ENCODE measurements at regions of chr4 and their contacts with region 1.

Region 1: DNA sequence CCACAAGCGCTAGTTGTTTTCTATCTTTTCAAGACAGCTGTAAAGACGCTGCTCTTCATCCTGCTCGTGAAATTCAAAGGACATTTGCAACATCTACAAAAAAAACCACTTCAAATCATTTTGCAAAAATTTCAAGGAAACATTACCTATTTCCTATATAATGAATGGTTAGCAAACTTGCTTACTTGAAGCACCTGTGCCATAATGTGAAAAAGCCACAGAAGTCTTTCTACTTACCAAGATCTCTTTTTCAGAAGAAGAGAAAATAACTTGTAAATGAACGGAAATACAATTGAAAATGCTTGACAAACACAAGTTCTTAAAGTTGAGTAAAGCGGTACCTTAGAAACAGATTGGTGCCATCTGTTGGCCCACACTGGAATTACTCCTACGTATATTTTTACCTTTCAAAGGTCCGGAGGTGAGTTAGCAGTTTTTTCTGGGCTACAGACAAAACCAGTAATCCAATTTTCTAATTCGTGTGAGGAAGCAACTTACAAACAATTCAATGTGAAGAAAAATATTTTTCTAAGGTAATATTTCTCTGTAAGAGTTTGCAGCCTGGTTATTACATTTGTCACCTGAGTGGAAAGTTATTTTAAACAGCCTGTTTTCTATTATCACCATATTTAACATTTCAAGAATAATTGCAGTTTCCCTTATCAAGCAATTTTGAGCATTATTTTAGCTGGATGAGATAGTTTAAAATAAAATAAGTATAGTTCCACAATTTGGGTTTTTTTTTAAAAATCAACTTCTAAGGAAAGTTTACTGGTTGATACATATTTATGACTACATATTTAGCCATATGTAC is at the start of gene TLR6:
- DNase-seq: peak; percentile 9 to 88 (median 58)
- ATAC-seq: peak; percentile 79 to 88 (median 80)
- H3K4me3 ChIP-seq: peak within 1 kb of the TSS in 1 of 2 donors; percentile 18
- H3K4me3 Mint-ChIP-seq: peak within 1 kb of the TSS; percentile 69 to 82 (median 81)
- H3K27ac ChIP-seq: peak within 1 kb of the TSS; percentile 30
- H3K27ac Mint-ChIP-seq: peak within 1 kb of the TSS; percentile 89 to 96
- H3K4me1 ChIP-seq: peaks cover 12 to 20% of the 10 kb centered on the region in 2 experiments
- H3K4me1 Mint-ChIP-seq: peaks cover 34 to 49% (median 48%) of the 10 kb centered on the region in 3 donors
- H3K27me3 ChIP-seq: no peaks in the 10 kb centered on the region
- H3K27me3 Mint-ChIP-seq: no peaks in the 10 kb centered on the region
- total RNA-seq, gene TLR6: 2.3 to 7.7 (median 3.2) TPM

Region 2: GRCh38 chr4:38413524-38414341 is 443.0 kb before region 1 on chr4:
- CTCF ChIA-PET with region 1: no interaction called
- POLR2A ChIA-PET with region 1: interaction called in 1 of 2 experiments, 12 read pairs
- DNase-seq: no peak
- ATAC-seq: no peak
- H3K4me3 ChIP-seq: no peak overlapping the region
- H3K4me3 Mint-ChIP-seq: no peak overlapping the region
- H3K27ac ChIP-seq: no peak overlapping the region
- H3K27ac Mint-ChIP-seq: no peak overlapping the region
- H3K4me1 ChIP-seq: peaks cover 0 to 4% of the 10 kb centered on the region in 2 experiments
- H3K4me1 Mint-ChIP-seq: peaks cover 9 to 17% (median 13%) of the 10 kb centered on the region in 3 donors
- H3K27me3 ChIP-seq: no peaks in the 10 kb centered on the region
- H3K27me3 Mint-ChIP-seq: peaks cover 0 to 3% of the 10 kb centered on the region in 2 donors

Region 3: DNA sequence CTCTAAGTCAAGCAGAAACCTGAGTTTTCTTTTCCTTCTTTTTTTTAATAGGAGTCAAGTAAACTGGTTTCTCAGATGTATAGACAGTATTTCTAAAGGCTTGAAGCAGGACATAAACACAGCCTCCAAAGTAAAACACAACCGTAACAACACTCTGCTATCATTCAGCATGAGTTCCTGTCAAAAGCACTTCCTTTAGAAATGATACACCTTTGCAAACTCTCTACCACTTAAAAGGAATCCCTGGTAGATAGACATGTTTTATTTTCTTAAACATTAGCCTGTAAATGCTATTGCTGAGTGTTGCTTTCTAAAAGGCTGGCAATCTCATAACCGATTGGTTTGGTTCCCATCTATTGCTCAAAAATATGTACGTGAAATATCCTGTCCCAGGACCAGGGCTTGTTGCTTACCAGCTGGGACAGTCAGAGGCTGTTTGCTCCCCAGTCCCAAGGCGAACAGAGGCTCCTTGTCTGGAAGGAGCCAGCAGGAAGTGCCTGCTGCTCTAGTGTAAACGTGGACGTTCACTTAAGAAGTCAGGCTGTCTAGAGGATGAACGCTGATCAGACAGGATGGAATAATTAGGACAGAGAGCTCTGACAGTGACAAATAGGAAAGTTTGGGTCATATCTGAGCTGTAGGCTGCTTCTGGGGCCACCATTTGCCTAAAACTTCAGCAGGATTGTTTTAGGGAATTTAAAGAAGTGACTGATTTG is 366.6 kb before region 1 on chr4:
- CTCF ChIA-PET with region 1: interaction called in 1 of 2 experiments, 13 read pairs
- POLR2A ChIA-PET with region 1: no interaction called
- DNase-seq: peak in 3 of 35 experiments; percentile 6 to 33 (median 14)
- ATAC-seq: peak; percentile 83 to 92 (median 88)
- H3K4me3 ChIP-seq: no peak overlapping the region
- H3K4me3 Mint-ChIP-seq: peak overlapping the region; percentile 49 to 78 (median 67)
- H3K27ac ChIP-seq: peak overlapping the region; percentile 64
- H3K27ac Mint-ChIP-seq: peak overlapping the region; percentile 97 to 98
- H3K4me1 ChIP-seq: peaks cover 25 to 26% of the 10 kb centered on the region in 2 experiments
- H3K4me1 Mint-ChIP-seq: peaks cover 39 to 52% (median 41%) of the 10 kb centered on the region in 3 donors
- H3K27me3 ChIP-seq: no peaks in the 10 kb centered on the region
- H3K27me3 Mint-ChIP-seq: no peaks in the 10 kb centered on the region

Region 4: DNA sequence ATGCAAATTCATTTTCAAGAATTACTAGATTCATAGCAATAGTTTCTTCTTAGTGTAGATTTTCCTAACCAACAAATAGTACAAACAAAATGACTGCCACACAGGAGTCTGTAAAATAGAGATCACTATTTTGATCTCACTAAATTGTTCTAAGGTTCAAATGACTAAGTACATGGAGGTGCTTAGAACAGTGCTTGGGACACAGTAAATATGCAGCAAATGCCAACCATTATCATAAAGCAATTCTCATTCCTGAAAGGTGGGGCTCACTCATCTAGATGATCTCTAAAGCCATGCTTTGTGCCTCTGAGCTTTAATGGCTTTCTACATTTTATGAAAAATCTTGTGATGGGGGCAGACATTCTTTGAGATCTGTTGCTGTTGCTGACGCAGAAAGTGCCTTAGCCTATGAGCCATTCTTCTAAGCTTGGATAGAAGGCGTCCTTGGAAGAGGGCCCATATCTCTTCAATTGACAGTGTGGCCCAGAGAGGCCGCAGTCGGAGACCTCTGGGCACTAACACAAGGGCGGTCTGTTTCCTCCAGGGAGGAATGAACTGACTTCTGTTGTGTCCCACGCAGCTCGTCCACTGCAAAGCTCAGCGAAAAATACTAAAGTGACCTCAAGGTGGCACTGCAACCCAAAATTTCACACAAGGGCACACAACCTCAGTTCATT is 97.5 kb before region 1 on chr4:
- CTCF ChIA-PET with region 1: interaction called, 25 to 44 read pairs
- POLR2A ChIA-PET with region 1: no interaction called
- DNase-seq: peak in 30 of 35 experiments; percentile 19 to 82 (median 43)
- ATAC-seq: peak; percentile 61 to 85 (median 75)
- H3K4me3 ChIP-seq: no peak overlapping the region
- H3K4me3 Mint-ChIP-seq: no peak overlapping the region
- H3K27ac ChIP-seq: no peak overlapping the region
- H3K27ac Mint-ChIP-seq: peak overlapping the region in 1 of 2 donors; percentile 8
- H3K4me1 ChIP-seq: peaks cover 0 to 10% of the 10 kb centered on the region in 2 experiments
- H3K4me1 Mint-ChIP-seq: peaks cover 20 to 27% (median 24%) of the 10 kb centered on the region in 3 donors
- H3K27me3 ChIP-seq: peaks cover 0 to 2% of the 10 kb centered on the region in 2 experiments
- H3K27me3 Mint-ChIP-seq: no peaks in the 10 kb centered on the region

Region 5: GRCh38 chr4:39083164-39083563 is 226.4 kb after region 1 on chr4:
- CTCF ChIA-PET with region 1: no interaction called
- POLR2A ChIA-PET with region 1: no interaction called
- DNase-seq: no peak
- ATAC-seq: no peak
- H3K4me3 ChIP-seq: no peak overlapping the region
- H3K4me3 Mint-ChIP-seq: no peak overlapping the region
- H3K27ac ChIP-seq: no peak overlapping the region
- H3K27ac Mint-ChIP-seq: no peak overlapping the region
- H3K4me1 ChIP-seq: no peaks in the 10 kb centered on the region
- H3K4me1 Mint-ChIP-seq: no peaks in the 10 kb centered on the region
- H3K27me3 ChIP-seq: no peaks in the 10 kb centered on the region
- H3K27me3 Mint-ChIP-seq: no peaks in the 10 kb centered on the region